Thyroid gland (tissue), 4 donors: ENCODE measurements at regions of chr16 and their contacts with region 1.

Region 1: DNA sequence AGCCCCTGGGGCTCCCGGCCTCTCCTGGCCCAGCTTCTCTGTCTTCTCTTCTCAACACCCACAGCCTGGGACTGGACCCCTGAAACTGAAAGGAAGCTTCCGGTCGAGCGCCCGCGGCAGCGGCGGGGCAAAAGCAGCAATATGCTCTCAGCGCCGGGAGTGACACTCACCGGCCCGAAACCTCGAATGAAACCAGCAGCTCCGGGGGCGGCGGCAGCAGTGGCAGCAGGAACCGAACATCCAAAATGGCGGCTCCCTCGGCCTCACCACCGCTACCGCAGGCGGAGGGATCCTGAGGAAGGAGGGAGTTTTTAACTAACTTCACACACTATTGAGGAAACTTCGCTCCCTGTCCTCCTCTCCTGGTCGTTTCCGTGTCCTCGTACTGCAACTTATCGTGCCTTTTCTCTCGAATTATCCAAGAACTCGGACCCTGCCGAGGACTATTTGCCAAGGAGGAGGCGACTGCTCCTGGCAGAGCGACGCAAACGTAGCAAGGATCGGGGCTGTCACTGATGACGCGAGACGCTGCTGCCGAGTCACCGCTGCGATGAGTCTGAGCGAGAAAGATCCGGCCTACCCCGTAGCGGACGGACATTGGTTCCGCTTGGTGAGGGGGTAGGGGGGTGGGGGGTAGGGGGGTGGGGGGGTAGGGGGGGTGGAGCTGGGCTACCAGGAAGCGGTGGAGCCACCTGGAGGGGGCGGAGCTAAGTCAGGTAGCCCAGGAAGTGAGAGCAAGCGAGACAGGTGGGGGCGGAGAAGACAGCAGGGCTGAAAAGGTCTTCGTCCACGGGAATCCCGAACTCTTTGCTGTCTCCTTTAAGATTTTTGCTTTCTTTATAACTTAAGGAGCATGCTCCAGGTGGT is at the start of gene AP1G1:
- DNase-seq: peak; percentile 96 to 97
- H3K4me3 ChIP-seq: peak within 1 kb of the TSS; percentile 76 to 89 (median 82)
- H3K27ac ChIP-seq: peak within 1 kb of the TSS; percentile 96 to 98 (median 97)
- H3K4me1 ChIP-seq: peaks cover 20 to 23% of the 10 kb centered on the region in 2 donors
- H3K27me3 ChIP-seq: no peaks in the 10 kb centered on the region
- CTCF ChIP-seq: peak in 1 of 6 experiments; percentile 10
- POLR2A ChIP-seq: peak; percentile 58 to 72
- total RNA-seq, gene AP1G1: 74.0 to 114 (median 96.9) TPM

Region 2: DNA sequence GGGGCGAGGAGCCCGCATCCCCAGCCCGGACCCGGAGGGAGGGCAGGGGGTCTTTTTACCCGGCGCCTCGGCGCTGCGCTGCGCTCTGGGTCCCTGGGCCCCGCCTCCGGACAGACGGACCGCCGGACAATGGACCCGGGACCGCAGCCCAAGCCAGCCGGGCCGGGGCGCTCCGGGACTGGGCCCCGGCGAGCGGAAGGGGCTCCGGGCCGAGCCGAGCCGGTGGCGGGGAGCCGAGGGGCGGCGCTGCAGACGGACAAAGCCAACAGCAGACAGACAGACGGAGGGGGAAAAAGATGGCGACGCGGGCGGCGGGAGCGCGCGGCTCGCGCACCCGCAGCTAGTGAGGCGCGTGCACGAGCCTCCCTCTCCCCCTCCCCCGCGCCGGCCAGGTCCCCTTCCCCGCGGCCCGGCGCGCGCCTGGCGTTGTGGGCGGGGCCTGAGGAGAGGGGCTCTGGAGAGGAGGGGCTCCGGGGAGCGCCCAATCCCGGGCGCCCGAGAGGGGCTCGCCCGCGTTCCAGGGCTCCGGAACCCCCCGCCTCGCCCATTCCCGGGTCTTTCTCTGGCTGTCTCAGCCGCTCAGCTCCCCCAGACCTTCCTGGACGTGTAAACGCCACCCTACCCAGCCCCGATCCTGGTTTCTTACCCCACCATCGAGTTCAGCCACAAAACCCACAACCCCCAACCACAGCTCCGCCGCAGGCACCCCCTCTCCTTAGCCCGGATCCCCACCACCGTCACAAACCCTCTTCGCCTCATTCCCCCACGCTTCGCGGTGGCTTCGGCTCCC is 75.2 kb after region 1 on chr16 and contains the start of gene ZNF821:
- intact Hi-C with region 1: loop called (anchors 10 kb)
- DNase-seq: peak; percentile 82 to 86
- H3K4me3 ChIP-seq: peak within 1 kb of the TSS; percentile 81 to 98 (median 85)
- H3K27ac ChIP-seq: peak within 1 kb of the TSS; percentile 89 to 99 (median 95)
- H3K4me1 ChIP-seq: peaks cover 5% of the 10 kb centered on the region in 2 donors
- H3K27me3 ChIP-seq: no peaks in the 10 kb centered on the region
- CTCF ChIP-seq: peak in 2 of 6 experiments; percentile 33 to 40
- POLR2A ChIP-seq: peak in 1 of 2 donors; percentile 65
- total RNA-seq, gene ZNF821: 7.9 to 17.8 (median 11.6) TPM

Region 3: GRCh38 chr16:72093448-72094265 is 284.8 kb after region 1 on chr16 and contains the starts of genes DHX38 and TXNL4B:
- intact Hi-C with region 1: loop called (anchors 10 kb)
- DNase-seq: peak; percentile 94 to 96
- H3K4me3 ChIP-seq: peak within 1 kb of the TSS; percentile 58 to 88 (median 82)
- H3K27ac ChIP-seq: peak within 1 kb of the TSS; percentile 81 to 89 (median 83)
- H3K4me1 ChIP-seq: peaks cover 16 to 18% of the 10 kb centered on the region in 2 donors
- H3K27me3 ChIP-seq: no peaks in the 10 kb centered on the region
- CTCF ChIP-seq: no peak
- POLR2A ChIP-seq: peak in 1 of 2 donors; percentile 88
- total RNA-seq, gene DHX38: 31.7 to 52.7 (median 47.7) TPM
- total RNA-seq, gene TXNL4B: 10.7 to 15.0 (median 13.1) TPM